ENCODE measurements at regions of chr7 and their contacts with region 1.

Region 1: DNA sequence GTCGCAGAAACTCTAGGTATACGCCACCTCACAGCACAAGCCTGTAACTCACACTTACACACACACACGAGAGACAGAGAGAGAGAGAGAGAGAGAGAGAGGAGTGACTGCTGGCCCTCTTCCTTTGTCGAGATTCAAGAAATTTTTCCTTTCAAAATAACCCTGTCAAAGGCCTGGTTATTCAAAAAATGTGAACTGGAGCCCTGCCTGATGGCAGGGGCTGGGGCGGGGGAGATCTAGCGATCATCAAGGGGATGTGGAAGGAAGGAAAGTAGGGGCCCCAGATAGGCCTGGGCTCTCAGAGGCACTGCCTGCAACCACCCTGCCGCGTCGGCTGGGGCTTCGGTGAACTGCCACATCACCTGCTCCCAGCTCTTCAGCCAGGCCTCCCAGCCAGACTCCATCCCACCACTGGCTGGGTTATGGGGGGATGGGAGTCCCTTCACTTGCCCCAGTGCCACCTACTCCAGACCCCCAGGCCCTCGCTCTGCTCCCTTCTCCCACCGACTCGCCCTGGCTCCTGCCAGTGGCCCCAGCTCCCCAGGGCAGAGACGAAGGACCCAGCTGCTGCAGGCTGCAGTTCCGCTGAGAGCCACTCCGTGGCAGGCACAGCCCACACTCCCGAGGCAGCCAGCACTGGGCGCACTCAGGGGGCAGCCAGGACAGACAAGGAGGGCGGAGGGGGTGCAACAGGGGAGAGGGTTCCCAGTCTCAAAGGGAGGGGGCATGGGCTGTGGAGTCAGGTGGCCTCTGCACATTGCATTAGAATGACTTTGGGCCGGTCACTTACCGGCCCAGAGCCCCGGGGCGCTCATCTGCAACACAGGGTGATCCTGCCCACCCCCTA is 15.3 kb downstream of the KCNH2 start:
- DNase-seq: peak; percentile 31
- H3K4me3 Mint-ChIP-seq: no peak overlapping the region
- H3K27ac Mint-ChIP-seq: no peak overlapping the region
- H3K4me1 Mint-ChIP-seq: no peaks in the 10 kb centered on the region
- H3K27me3 Mint-ChIP-seq: peaks cover 32% of the 10 kb centered on the region
- CTCF ChIP-seq: peak; percentile 92

Region 2: DNA sequence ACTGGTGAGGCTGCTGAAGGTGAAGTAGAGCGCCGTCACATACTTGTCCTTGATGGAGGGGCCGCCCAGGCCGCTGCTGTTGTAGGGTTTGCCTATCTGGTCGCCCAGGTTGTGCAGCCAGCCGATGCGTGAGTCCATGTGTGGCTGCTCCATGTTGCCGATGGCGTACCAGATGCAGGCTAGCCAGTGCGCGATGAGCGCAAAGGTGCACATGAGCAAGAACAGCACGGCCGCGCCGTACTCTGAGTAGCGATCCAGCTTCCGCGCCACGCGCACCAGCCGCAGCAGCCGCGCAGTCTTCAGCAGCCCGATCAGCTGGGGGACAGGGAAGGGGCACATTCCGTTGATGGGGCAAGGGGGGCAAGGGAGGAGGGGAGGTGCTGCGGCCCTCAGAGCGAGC is 11.3 kb before region 1 on chr7:
- CTCF ChIA-PET with region 1: interaction called, 18 read pairs
- POLR2A ChIA-PET with region 1: no interaction called
- intact Hi-C with region 1: no loop called
- DNase-seq: no peak
- H3K4me3 Mint-ChIP-seq: no peak overlapping the region
- H3K27ac Mint-ChIP-seq: no peak overlapping the region
- H3K4me1 Mint-ChIP-seq: peaks cover 4% of the 10 kb centered on the region
- H3K27me3 Mint-ChIP-seq: no peaks in the 10 kb centered on the region
- CTCF ChIP-seq: no peak

Region 3: DNA sequence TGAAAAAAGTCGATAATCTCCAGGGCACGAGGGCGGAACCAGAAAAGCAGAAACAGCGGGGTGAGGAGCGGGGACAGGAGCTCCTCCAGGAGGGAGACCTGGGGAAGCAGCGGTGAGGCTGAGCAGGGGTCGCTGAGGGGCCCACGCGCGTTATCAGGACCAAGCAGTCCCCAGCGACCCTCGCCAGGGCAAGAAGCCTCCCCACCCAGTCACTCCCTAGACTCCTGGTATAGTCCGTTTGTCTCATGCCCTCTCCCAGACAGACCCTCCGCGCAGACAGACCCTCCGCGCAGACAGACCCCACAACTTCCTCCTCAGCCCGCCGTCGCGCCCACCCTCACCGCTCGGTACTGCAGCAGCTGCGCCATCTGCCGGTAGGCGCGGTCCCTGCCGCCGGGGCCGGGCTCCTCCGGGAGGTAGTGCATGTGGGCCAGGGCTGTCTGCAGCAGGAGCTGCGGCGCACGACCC is 55.2 kb after region 1 on chr7:
- CTCF ChIA-PET with region 1: interaction called, 4 read pairs
- POLR2A ChIA-PET with region 1: no interaction called
- intact Hi-C with region 1: loop called (anchors 5 kb)
- DNase-seq: peak; percentile 23
- H3K4me3 Mint-ChIP-seq: peak overlapping the region; percentile 15
- H3K27ac Mint-ChIP-seq: no peak overlapping the region
- H3K4me1 Mint-ChIP-seq: peaks cover 10% of the 10 kb centered on the region
- H3K27me3 Mint-ChIP-seq: peaks cover 23% of the 10 kb centered on the region
- CTCF ChIP-seq: peak; percentile 85